Pancreas (tissue), 10 donors: ENCODE measurements at regions of chr6 and their contacts with region 1.

Region 1: GRCh38 chr6:76351275-76351674 is 278.8 kb upstream of the IMPG1 start:
- DNase-seq: peak in 3 of 6 donors; percentile 23 to 39 (median 27)
- ATAC-seq: peak; percentile 77 to 99 (median 90)
- H3K4me3 ChIP-seq: no peak overlapping the region
- H3K27ac ChIP-seq: no peak overlapping the region
- H3K4me1 ChIP-seq: no peaks in the 10 kb centered on the region
- H3K27me3 ChIP-seq: no peaks in the 10 kb centered on the region
- CTCF ChIP-seq: peak in 3 of 4 donors; percentile 20 to 53 (median 35)

Region 2: GRCh38 chr6:75934643-75935472 is 416.4 kb before region 1 on chr6:
- intact Hi-C with region 1: loop called in 1 of 3 experiments (anchors 10 kb)
- DNase-seq: peak; percentile 37 to 71 (median 51)
- ATAC-seq: peak; percentile 83 to 91 (median 88)
- H3K4me3 ChIP-seq: peak overlapping the region in 3 of 4 donors; percentile 4 to 45 (median 15)
- H3K27ac ChIP-seq: no peak overlapping the region
- H3K4me1 ChIP-seq: peaks cover 0 to 5% (median 0%) of the 10 kb centered on the region in 3 donors
- H3K27me3 ChIP-seq: no peaks in the 10 kb centered on the region
- CTCF ChIP-seq: peak; percentile 44 to 69 (median 55)

Region 3: DNA sequence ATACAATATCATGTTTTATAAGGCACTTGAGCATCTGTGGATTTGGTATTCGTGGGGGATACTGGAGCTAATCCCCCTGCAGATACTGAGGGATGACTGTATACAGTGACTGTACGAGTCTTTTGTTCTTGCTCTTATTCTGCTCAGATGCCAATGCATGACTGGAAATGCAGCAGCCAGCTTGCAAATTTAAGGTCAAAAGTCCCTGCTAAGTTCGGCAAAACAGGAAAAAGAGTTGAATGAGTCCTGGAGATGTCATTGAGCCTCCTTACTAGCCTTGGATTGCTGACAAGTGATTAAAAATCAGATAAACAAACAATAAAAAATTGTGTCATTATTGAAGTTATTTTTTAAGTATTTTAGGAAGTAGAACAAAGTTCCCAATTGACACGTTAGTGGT is 320.5 kb after region 1 on chr6:
- intact Hi-C with region 1: no loop called
- DNase-seq: no peak
- ATAC-seq: no peak
- H3K4me3 ChIP-seq: no peak overlapping the region
- H3K27ac ChIP-seq: no peak overlapping the region
- H3K4me1 ChIP-seq: no peaks in the 10 kb centered on the region
- H3K27me3 ChIP-seq: no peaks in the 10 kb centered on the region
- CTCF ChIP-seq: no peak